GM10248 (cell line): ENCODE measurements at regions of chr5 and their contacts with region 1.

Region 1: GRCh38 chr5:133878236-133878555 is 90.2 kb downstream of the C5orf15 start:
- DNase-seq: no peak
- CTCF ChIP-seq: no peak

Region 2: DNA sequence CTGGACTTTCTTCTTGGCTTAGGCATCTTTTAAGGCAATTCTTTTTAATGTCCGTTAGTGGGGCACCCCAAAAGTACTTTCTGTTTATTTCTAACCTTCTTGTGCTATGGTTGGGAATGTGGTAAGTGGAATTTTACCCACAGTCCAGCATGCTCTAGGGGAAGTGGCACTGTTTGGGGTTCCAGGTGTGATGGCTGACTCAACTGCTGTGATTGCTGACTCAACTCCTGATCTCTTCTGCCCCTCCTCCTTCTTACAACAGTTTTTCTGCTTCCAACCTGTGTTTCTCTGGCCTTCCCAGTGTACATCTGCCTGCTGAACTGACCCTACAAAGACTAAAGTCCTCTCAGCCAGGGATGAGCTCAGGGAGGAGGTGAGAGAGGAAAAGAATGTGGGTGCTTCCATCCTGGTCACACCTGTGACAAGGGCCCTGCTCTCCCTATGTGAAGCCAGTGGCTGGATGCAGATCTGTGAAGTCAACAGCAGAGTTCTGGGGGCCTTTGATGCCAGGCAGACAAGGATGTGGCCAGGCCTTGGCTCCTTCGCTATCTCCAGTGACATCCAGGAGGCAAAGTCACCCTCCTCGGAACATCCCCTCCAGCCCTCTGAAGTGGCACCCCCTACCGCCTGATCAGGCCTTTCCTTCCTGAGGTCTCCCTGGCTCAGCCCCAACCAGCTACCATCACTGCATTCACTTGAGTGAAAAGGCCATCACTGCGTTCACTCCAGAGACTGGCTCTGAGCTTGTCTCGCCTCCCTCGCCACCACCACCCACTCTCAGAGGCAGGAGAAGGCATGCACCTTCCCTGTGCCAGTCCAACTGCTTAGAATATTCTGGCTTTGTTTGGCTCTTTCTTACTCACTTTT is 18.0 kb after region 1 on chr5:
- CTCF ChIA-PET with region 1: interaction called, 12 read pairs
- POLR2A ChIA-PET with region 1: no interaction called
- DNase-seq: no peak
- CTCF ChIP-seq: no peak

Region 3: GRCh38 chr5:134004592-134005375 is 126.6 kb after region 1 on chr5 and contains the start of gene VDAC1:
- CTCF ChIA-PET with region 1: no interaction called
- POLR2A ChIA-PET with region 1: no interaction called
- DNase-seq: peak; percentile 96
- CTCF ChIP-seq: no peak

Region 4: DNA sequence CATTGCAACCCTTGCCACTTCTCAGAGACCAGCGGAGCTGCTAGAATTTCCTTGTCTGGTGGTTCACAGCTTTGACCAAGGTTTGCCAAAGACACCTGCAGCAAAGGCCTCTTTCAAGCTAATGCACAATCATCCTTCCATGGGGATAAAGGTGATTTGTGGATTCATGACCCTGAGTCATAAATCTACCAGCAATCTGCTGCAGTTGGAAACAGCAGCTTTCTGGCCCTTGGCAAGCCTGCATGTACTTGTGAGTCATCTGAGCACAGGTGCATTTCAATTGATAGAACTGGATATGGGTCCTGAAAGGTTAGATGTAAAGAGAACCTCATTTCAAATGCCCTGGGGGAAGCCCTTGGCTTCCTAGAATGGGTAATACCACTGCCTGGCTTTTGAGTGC is 214.7 kb after region 1 on chr5:
- CTCF ChIA-PET with region 1: no interaction called
- POLR2A ChIA-PET with region 1: no interaction called
- DNase-seq: no peak
- CTCF ChIP-seq: no peak